ENCODE measurements at regions of chr16 and their contacts with region 1.

Region 1: DNA sequence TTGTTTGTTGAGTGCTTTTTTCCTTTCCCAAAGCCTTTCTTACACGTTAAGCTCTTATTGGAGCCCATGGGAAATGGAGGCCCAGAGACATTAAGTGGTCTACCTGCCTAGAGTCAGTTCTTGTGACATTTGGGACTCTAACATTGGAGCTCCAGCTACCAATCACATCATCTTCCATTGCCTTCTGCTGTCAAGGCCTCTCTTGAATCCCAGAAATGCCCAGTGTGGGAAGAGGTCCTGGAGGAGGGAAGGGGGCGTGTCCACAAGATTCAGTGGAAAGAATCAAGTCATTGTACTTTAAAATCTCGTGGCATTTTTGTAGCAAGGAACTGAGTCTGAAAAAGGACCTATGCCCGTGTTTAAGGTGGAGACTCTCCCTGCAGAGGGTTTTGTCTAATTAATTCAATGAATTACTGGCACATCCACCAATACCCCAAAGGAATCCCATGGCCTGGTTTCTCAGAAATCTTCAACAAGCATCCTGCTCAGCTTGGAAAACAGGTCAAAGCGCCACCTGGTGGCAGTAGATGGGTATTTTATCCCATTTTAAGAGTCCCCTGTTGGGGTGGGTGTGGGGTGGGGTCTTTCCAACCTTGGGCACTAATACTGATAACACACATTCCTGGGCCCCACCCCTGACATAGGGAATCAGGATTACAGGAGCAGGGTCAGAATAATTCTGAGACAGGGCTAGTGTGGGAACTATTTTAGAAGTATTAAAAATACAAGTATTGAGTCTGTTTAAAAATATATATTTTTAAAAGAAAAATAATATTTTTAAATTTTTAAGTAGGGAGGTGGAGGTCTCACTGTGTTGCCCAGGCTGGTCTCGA is 24.6 kb downstream of the GPT2 start:
- DNase-seq: peak; percentile 39 to 65 (median 54)
- ATAC-seq: peak; percentile 41
- H3K4me3 ChIP-seq: no peak overlapping the region
- H3K27ac ChIP-seq: peak overlapping the region in 2 of 4 donors; percentile 27 to 28
- H3K4me1 ChIP-seq: peaks cover 39% of the 10 kb centered on the region
- H3K27me3 ChIP-seq: no peaks in the 10 kb centered on the region
- CTCF ChIP-seq: peak; percentile 51 to 80 (median 60)
- POLR2A ChIP-seq: no peak

Region 2: GRCh38 chr16:46857368-46857945 is 51.3 kb before region 1 on chr16:
- intact Hi-C with region 1: loop called (anchors 5 kb)
- DNase-seq: peak; percentile 43 to 67 (median 50)
- ATAC-seq: peak; percentile 80
- H3K4me3 ChIP-seq: no peak overlapping the region
- H3K27ac ChIP-seq: no peak overlapping the region
- H3K4me1 ChIP-seq: peaks cover 24% of the 10 kb centered on the region
- H3K27me3 ChIP-seq: no peaks in the 10 kb centered on the region
- CTCF ChIP-seq: peak in 6 of 7 experiments; percentile 16 to 68 (median 62)
- POLR2A ChIP-seq: no peak